ENCODE measurements at regions of chr5 and their contacts with region 1.

Region 1: GRCh38 chr5:34022121-34022705 is 14.4 kb upstream of the AMACR start:
- DNase-seq: peak; percentile 41
- H3K4me3 Mint-ChIP-seq: no peak overlapping the region
- H3K27ac Mint-ChIP-seq: peak overlapping the region; percentile 88
- H3K4me1 Mint-ChIP-seq: peaks cover 36% of the 10 kb centered on the region
- H3K27me3 Mint-ChIP-seq: no peaks in the 10 kb centered on the region

Region 2: DNA sequence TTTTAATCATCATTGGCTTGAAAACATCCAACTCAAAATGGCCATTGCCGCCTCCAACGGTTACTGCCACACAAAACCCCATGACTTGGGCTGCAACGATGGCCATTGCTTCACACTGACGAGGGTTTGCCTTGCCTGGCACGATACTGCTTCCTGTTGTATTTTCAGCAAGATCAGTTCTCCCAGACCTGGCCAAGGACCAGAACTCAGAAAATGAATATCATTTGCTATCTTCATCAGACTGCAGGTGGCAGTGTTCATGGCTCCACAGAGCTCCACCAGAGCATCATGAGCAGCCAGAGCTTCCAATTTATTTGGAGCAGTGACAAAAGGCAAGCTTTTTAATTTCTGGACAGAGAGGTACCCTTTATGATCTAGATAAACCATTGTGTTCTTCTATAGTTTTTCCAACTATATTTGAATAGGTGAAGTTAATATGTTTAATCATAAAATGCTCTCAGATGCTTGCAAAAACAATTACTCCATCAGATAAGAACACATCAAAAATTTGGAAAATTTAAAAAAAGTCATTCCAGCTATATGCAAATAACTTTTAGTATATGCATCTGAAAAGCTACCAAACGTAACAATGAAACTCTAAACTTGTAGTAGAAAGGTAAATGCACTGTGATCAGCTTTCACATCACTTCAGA is 24.8 kb before region 1 on chr5:
- intact Hi-C with region 1: loop called (anchors 1 kb)
- DNase-seq: no peak
- H3K4me3 Mint-ChIP-seq: no peak overlapping the region
- H3K27ac Mint-ChIP-seq: no peak overlapping the region
- H3K4me1 Mint-ChIP-seq: peaks cover 31% of the 10 kb centered on the region
- H3K27me3 Mint-ChIP-seq: no peaks in the 10 kb centered on the region

Region 3: GRCh38 chr5:34007621-34008600 is 14.3 kb before region 1 on chr5 and contains the start of gene AMACR:
- intact Hi-C with region 1: loop called (anchors 1 kb)
- DNase-seq: peak; percentile 85
- H3K4me3 Mint-ChIP-seq: peak within 1 kb of the TSS; percentile 86
- H3K27ac Mint-ChIP-seq: peak within 1 kb of the TSS; percentile 86
- H3K4me1 Mint-ChIP-seq: peaks cover 29% of the 10 kb centered on the region
- H3K27me3 Mint-ChIP-seq: no peaks in the 10 kb centered on the region
- total RNA-seq, gene AMACR: 8.3 and 9.0 TPM in 2 replicates